ENCODE measurements at regions of chr7 and their contacts with region 1.

Region 1: DNA sequence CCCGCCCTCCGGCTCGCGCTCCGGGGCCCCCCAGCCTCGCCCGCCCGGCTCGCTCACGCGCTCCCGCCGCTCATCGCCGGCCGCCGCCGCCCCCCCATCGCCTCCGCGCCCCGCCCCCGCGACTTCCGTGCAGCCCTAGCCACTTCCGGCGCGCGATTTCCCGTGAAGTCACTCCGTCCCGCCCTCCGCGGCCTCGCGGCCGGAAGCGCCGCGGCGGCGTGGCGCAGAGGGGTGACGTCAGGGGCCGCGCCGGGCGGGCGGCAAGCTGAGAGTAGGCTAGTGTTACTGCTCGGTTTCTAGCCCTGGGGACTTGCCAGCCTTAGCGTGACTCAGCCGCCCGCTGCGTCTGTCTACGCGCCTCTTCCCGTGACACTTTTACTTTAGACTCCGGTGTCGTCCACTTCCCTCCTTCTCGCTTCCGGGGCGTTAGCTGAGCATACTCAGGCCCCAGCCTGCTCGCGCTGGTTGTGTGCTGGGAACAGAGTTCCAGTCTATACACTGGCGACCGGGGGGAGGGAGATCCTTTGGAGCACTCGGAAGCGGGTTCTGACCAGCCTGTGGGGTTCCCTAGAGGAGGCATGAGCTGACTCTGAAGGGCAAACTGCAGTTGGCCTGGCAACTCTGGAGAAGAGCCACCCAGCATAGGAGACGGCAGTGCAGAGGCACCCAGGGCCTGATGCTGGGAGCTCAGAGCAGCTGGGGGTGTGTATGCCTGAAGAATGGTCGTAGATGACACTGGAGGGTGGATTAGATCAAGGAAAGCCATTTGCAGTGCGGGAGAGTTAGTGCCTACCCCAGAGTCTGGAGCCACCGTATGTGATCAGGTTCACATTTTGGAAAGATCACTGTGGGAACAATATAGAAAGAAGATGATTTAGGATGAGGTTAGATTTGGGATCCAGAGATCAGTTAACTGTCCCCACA is at the start of gene PURB:
- DNase-seq: peak; percentile 97
- H3K4me3 Mint-ChIP-seq: peak within 1 kb of the TSS; percentile 98
- H3K27ac Mint-ChIP-seq: peak within 1 kb of the TSS; percentile 100
- H3K4me1 Mint-ChIP-seq: peaks cover 67% of the 10 kb centered on the region
- H3K27me3 Mint-ChIP-seq: no peaks in the 10 kb centered on the region
- total RNA-seq, gene PURB: 42.1 and 42.6 TPM in 2 replicates

Region 2: GRCh38 chr7:44082541-44083207 is 803.0 kb before region 1 on chr7:
- intact Hi-C with region 1: loop called (anchors 1 kb)
- DNase-seq: peak; percentile 97
- H3K4me3 Mint-ChIP-seq: peak overlapping the region; percentile 90
- H3K27ac Mint-ChIP-seq: peak overlapping the region; percentile 84
- H3K4me1 Mint-ChIP-seq: peaks cover 28% of the 10 kb centered on the region
- H3K27me3 Mint-ChIP-seq: no peaks in the 10 kb centered on the region

Region 3: DNA sequence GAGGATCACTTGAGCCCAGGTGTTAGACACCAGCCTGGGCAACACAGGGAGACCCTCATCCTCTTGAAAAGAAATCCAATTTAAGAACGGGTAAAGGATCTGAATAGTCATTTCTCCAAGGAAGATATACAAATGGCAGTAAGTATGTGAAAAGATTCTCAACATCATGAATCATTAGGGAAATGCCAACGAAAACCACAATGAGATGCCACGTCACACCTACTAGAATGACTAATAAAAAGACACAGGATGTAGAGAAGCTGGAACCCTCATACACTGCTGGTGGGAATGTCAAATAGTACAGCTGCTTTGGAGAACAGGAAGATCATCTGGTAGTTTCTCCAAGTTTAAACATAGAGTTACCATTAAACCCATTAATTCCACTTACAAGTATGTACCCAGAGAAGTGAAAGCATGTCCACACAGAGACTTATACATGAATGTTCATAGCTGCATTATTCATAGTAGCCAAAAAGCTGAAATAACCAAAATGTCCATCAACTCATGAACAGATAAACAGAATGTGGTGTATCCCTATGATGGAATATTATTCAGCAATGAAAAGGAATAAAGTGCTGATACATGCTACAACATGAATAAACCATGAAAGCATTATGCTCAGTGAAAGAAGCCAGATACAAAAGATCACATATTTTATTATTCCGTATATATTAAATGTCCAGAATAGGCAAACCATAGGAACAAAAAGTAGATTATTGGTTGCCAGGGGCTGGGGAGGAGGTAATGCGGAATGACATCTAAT is 150.1 kb before region 1 on chr7:
- intact Hi-C with region 1: no loop called
- DNase-seq: peak; percentile 42
- H3K4me3 Mint-ChIP-seq: peak overlapping the region; percentile 50
- H3K27ac Mint-ChIP-seq: peak overlapping the region; percentile 89
- H3K4me1 Mint-ChIP-seq: peaks cover 29% of the 10 kb centered on the region
- H3K27me3 Mint-ChIP-seq: peaks cover 2% of the 10 kb centered on the region

Region 4: DNA sequence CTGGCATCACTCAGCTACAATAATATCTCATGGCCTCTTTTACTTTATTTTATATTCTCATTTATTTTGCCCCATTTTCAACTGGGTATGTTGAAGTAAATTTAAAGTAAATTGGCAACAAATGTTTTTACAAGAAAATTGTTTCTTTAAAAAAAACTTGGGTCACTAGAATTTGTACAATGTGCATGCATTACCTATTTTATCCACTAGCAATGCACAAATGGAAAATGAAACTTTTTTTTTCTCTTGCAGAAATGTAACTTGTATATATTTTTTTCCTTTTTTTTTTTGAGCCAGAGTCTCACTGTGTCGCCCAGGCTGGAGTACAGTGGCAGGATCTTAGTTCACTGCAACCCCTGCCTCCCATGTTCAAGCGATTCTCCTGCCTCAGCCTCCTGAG is 27.5 kb before region 1 on chr7:
- intact Hi-C with region 1: loop called (anchors 1 kb)
- DNase-seq: no peak
- H3K4me3 Mint-ChIP-seq: no peak overlapping the region
- H3K27ac Mint-ChIP-seq: no peak overlapping the region
- H3K4me1 Mint-ChIP-seq: peaks cover 17% of the 10 kb centered on the region
- H3K27me3 Mint-ChIP-seq: peaks cover 2% of the 10 kb centered on the region

Region 5: GRCh38 chr7:44921607-44922359 is 36.1 kb after region 1 on chr7:
- intact Hi-C with region 1: loop called (anchors 1 kb)
- DNase-seq: peak; percentile 86
- H3K4me3 Mint-ChIP-seq: no peak overlapping the region
- H3K27ac Mint-ChIP-seq: peak overlapping the region; percentile 79
- H3K4me1 Mint-ChIP-seq: peaks cover 15% of the 10 kb centered on the region
- H3K27me3 Mint-ChIP-seq: peaks cover 7% of the 10 kb centered on the region

Region 6: GRCh38 chr7:44999245-45000095 is 113.8 kb after region 1 on chr7:
- intact Hi-C with region 1: loop called (anchors 1 kb)
- DNase-seq: peak; percentile 99
- H3K4me3 Mint-ChIP-seq: peak overlapping the region; percentile 88
- H3K27ac Mint-ChIP-seq: peak overlapping the region; percentile 91
- H3K4me1 Mint-ChIP-seq: peaks cover 58% of the 10 kb centered on the region
- H3K27me3 Mint-ChIP-seq: no peaks in the 10 kb centered on the region

Region 7: DNA sequence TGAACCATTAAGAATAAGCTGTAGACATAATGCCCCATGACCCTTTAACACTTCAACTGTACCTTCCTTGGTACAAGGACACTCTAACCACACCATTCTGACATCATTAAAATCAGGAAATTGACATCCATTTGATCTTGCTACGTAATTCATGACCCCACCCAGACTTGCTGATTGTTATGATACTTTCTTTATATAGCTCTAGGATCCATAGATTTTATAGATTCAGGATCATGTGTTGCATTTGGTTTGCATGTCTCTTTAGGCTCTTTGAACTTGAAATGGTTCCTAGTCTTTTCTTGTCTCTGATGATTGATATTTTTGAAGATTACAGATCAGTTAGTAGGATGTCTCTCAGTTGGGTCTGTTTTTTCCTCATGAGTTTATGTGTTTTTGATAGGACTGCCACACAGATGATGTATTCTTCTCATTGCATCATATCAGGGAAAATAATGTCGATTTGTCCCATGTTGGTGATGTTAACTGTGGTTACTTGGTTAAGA is 127.9 kb after region 1 on chr7:
- intact Hi-C with region 1: no loop called
- DNase-seq: no peak
- H3K4me3 Mint-ChIP-seq: no peak overlapping the region
- H3K27ac Mint-ChIP-seq: no peak overlapping the region
- H3K4me1 Mint-ChIP-seq: peaks cover 30% of the 10 kb centered on the region
- H3K27me3 Mint-ChIP-seq: no peaks in the 10 kb centered on the region

Region 8: GRCh38 chr7:45196374-45196773 is 310.7 kb after region 1 on chr7:
- intact Hi-C with region 1: loop called (anchors 1 kb)
- DNase-seq: peak; percentile 14
- H3K4me3 Mint-ChIP-seq: no peak overlapping the region
- H3K27ac Mint-ChIP-seq: peak overlapping the region; percentile 83
- H3K4me1 Mint-ChIP-seq: peaks cover 67% of the 10 kb centered on the region
- H3K27me3 Mint-ChIP-seq: peaks cover 4% of the 10 kb centered on the region

Measured in activated T-helper 1 cell treated with anti-CD3 and anti-CD28 coated beads, Interleukin-12 subunit alpha, Interleukin-12 subunit beta, Interleukin-2, Interleukin-4 antibody, amounts not matched to agents 30 ng/mL and 10 ng/mL and 1 ng/mL, durations not matched to agents 14 hours and 24 hours and 36 hours (primary cell).